ENCODE measurements at regions of chr19 and their contacts with region 1.

Region 1: GRCh38 chr19:6654347-6655310 is 15.3 kb downstream of the TNFSF14 start:
- DNase-seq: peak; percentile 85
- H3K4me3 Mint-ChIP-seq: peak overlapping the region; percentile 61
- H3K27ac Mint-ChIP-seq: peak overlapping the region; percentile 95
- H3K4me1 Mint-ChIP-seq: peaks cover 59% of the 10 kb centered on the region
- H3K27me3 Mint-ChIP-seq: no peaks in the 10 kb centered on the region

Region 2: DNA sequence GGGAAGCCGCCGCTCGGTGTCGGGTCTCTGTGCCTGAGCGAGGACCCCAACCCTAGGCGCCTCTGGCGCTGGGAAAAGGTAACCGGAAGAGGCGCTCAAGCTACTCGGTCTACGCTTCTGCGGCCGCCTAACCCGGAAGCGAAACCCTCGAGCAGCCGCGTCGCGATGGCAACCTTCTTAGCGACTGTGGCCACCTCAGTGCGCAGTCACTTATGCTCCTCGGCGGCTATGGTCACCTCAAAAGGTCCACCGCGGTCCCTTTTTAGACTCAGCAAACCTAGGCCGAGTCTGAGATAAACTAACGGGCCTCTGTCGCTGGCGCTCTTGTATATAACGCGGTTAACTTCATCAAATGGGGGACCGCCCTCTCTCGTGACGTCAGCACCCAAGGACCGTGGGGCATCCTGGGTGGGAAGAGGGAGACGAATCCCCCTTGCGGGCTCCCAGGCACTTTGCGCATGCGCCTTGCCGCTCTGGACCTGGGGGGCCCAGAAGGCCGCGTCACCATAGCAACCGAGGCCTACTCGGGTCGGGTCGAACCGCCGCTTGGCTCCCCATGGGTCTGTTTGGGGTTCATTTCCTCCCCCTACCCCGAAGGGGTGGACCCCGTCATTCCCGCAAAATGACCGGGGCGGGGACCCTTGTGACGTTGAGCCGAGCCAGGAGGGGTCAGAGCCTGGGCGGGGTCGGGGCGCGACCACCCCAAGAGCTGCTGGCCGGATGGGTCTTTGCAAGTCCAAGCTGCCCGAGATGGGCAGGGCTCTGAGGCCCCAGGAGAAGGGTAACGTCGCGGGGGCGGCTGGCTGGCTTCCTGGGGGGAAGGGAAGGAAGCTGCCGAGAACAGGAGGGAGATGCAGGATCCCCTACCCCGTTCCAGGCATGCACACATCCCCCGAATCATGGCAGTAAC is 261.3 kb before region 1 on chr19 and contains the start of gene GTF2F1:
- CTCF ChIA-PET with region 1: no interaction called
- POLR2A ChIA-PET with region 1: no interaction called
- intact Hi-C with region 1: no loop called
- DNase-seq: peak; percentile 94
- H3K4me3 Mint-ChIP-seq: peak within 1 kb of the TSS; percentile 94
- H3K27ac Mint-ChIP-seq: peak within 1 kb of the TSS; percentile 93
- H3K4me1 Mint-ChIP-seq: peaks cover 24% of the 10 kb centered on the region
- H3K27me3 Mint-ChIP-seq: no peaks in the 10 kb centered on the region
- total RNA-seq, gene GTF2F1: 67.0 to 70.9 TPM

Region 3: DNA sequence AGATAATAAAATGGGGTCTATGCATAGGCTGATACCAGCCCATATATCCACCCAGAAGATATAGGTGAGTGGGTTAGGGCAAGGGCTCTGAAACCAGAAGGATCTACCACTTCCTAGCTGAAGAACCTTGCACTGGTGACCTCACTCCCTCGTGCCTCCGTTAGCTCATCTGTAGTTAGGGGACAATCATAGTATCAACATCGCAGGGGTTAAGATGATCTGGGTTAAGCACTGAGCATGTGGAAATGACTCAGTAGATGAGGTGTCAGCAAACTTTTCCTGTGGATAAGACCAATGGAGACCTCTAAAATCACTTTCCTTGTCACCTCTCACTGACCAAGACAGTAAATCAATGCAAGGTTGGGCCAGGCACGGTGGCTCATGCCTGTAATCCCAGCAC is 15.2 kb before region 1 on chr19:
- CTCF ChIA-PET with region 1: interaction called, 5 read pairs
- POLR2A ChIA-PET with region 1: interaction called, 7 read pairs
- intact Hi-C with region 1: loop called (anchors 2 kb)
- DNase-seq: peak; percentile 64
- H3K4me3 Mint-ChIP-seq: no peak overlapping the region
- H3K27ac Mint-ChIP-seq: no peak overlapping the region
- H3K4me1 Mint-ChIP-seq: peaks cover 29% of the 10 kb centered on the region
- H3K27me3 Mint-ChIP-seq: no peaks in the 10 kb centered on the region

Region 4: DNA sequence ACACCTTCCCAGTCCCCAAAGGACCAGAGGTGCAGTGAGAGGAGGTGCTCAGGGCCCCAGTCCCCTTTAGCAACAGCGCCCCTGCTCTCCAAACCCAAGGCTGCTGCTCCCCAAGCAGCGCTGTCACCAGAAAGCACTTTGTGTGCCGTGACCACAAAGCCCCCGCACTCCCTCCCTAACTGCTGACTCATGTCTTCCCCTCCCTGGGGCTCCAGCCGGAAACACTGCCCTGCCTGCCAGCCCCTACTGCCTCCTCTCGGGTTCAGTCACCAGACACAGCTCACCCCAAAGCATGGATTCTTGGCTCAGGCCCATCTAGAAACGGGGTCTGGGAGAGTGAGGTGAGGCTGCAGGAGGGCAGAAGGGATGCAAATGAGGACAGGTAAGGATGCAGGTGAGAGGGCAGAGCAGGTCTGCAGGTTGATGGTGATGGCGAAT is 20.3 kb after region 1 on chr19:
- CTCF ChIA-PET with region 1: interaction called, 12 read pairs
- POLR2A ChIA-PET with region 1: interaction called, 37 read pairs
- intact Hi-C with region 1: loop called (anchors 1 kb)
- DNase-seq: peak; percentile 98
- H3K4me3 Mint-ChIP-seq: peak overlapping the region; percentile 62
- H3K27ac Mint-ChIP-seq: peak overlapping the region; percentile 79
- H3K4me1 Mint-ChIP-seq: peaks cover 69% of the 10 kb centered on the region
- H3K27me3 Mint-ChIP-seq: peaks cover 3% of the 10 kb centered on the region

Measured in activated CD4-positive, alpha-beta memory T cell treated with anti-CD3 and anti-CD28 coated beads for 36 hours (primary cell).